GM23248 (cell line): ENCODE measurements at regions of chr12 and their contacts with region 1.

Region 1: GRCh38 chr12:39272871-39273770 is 169.8 kb downstream of the KIF21A start:
- DNase-seq: peak; percentile 66
- H3K4me3 ChIP-seq: no peak overlapping the region
- H3K27ac ChIP-seq: no peak overlapping the region
- H3K4me1 ChIP-seq: no peaks in the 10 kb centered on the region
- H3K27me3 ChIP-seq: peaks cover 13% of the 10 kb centered on the region; the same call in 1 of the 2 replicates

Region 2: DNA sequence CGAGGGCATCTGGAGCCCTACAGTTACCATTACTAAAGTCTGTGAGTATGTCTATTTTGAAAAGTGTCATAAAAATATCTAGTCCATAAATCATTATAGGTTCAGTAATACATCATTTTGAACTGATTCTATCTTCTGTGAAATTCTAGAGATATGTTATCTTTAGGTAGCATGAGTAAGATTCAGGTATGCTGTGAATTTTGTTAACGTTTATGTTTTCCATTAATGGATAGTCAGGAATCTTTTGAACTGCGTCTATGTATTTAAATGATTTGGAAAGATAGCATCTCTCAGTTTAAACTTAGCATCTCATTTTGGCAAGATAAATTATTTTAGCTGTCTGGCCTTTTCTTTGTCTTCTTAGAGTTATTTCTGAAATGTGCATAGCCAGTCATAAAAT is 948.2 kb before region 1 on chr12:
- in situ Hi-C with region 1: loop called (anchors 10 kb)
- DNase-seq: no peak
- H3K4me3 ChIP-seq: no peak overlapping the region
- H3K27ac ChIP-seq: no peak overlapping the region
- H3K4me1 ChIP-seq: no peaks in the 10 kb centered on the region
- H3K27me3 ChIP-seq: no peaks in the 10 kb centered on the region

Region 3: GRCh38 chr12:39178837-39179236 is 94.3 kb before region 1 on chr12:
- in situ Hi-C with region 1: no loop called
- DNase-seq: no peak
- H3K4me3 ChIP-seq: no peak overlapping the region
- H3K27ac ChIP-seq: no peak overlapping the region
- H3K4me1 ChIP-seq: no peaks in the 10 kb centered on the region
- H3K27me3 ChIP-seq: no peaks in the 10 kb centered on the region

Region 4: DNA sequence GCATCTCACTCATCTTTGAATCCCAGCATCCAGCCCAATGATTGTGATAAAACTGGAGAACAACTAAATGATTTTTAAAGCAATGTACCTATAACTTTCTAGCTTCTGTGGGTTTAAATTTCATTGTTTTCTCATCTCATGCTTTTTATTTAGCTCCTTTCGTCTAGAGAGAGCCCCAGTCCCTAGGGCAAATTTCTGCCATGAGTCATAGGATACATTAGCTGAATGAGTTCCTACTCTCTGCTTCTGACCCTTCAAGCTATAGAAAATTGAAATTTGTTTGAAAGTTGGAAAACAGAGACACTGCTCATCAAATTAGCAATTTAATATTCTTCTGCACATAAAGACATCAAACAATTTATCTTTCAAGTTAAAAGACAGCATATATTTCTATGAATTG is 55.9 kb after region 1 on chr12:
- in situ Hi-C with region 1: no loop called
- DNase-seq: peak; percentile 10
- H3K4me3 ChIP-seq: no peak overlapping the region
- H3K27ac ChIP-seq: no peak overlapping the region
- H3K4me1 ChIP-seq: no peaks in the 10 kb centered on the region
- H3K27me3 ChIP-seq: no peaks in the 10 kb centered on the region

Region 5: DNA sequence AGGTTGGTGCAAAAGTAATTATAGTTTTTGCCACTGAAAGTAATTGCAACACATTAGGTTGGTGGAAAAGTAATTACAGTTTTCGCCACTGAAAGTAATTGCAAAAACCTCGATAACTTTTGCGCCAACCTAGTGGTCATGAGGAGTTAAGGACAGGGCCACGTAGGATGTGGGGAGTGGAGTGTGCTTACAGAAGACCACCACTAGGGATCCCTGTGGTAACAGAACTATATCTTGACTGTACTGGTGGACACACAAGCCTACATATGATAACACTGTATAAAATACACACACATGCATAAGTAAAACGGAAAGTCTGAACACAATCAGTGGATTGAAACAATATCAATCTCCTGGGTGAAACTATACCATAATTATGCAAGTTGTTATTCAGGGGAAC is 533.9 kb after region 1 on chr12:
- in situ Hi-C with region 1: no loop called
- DNase-seq: peak; percentile 22
- H3K4me3 ChIP-seq: no peak overlapping the region
- H3K27ac ChIP-seq: no peak overlapping the region
- H3K4me1 ChIP-seq: no peaks in the 10 kb centered on the region
- H3K27me3 ChIP-seq: no peaks in the 10 kb centered on the region